Heart left ventricle (tissue), 16 donors: ENCODE measurements at regions of chr3 and their contacts with region 1.

Region 1: DNA sequence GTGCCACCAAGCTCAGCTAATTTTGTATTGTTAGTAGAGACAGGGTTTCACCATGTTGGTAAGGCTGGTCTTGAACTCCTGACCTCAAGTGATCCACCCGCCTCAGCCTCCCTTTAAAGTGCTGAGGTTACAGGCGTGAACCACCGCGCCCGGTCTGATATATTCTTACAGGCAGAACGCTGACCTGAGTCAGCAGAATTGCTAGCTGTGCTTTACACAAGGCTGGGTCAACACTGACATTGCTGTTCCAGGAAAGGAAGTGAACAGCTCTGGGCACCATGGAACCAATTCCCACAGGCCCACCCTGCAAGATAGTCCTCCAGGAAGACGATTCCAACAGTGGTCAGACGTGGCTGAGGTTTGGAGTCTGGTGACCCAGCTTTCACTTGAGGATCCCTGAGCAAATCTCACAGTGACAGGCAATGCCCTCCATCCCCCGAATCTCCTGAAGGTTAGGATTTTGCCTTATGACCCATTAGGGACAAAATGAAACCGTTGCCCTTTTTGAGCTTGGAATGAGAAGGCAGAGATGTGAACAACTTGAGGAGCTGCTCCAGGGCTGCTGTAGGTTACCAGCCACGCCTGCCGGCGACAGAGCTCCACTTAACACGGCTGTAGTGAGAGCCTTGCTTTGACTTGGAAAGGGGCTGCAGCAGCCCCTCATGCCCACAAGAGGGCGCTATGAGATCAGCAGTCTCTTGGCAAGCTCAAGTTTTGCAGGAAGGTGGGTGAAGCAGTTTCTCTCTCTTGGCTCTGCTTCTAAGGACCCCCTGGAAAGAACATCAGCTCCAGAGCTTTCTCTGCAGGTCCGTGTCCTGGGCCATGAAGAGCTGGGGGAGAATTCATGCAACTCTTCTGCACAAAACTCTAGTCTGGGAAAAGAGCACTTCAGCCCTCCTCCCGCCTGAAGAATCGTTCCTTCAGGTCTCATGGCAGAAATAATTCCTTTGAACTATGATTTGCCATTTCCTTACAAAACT is 74.1 kb downstream of the SENP2 start:
- DNase-seq: peak; percentile 58 to 74 (median 71)
- ATAC-seq: peak; percentile 39 to 74 (median 56)
- H3K4me3 ChIP-seq: peak overlapping the region in 1 of 12 donors; percentile 25
- H3K27ac ChIP-seq: no peak overlapping the region
- H3K4me1 ChIP-seq: peaks cover 0 to 32% (median 5%) of the 10 kb centered on the region in 12 donors
- H3K27me3 ChIP-seq: no peaks in the 10 kb centered on the region
- CTCF ChIP-seq: peak; percentile 88 to 98 (median 96)
- POLR2A ChIP-seq: no peak

Region 2: GRCh38 chr3:185764163-185764979 is 104.1 kb after region 1 on chr3:
- intact Hi-C with region 1: loop called in 5 of 10 experiments (anchors 1 to 10 kb)
- DNase-seq: no peak
- ATAC-seq: peak; percentile 38 to 60 (median 44)
- H3K4me3 ChIP-seq: peak overlapping the region in 7 of 12 donors; percentile 7 to 28 (median 22)
- H3K27ac ChIP-seq: peak overlapping the region in 7 of 12 donors; percentile 7 to 44 (median 22)
- H3K4me1 ChIP-seq: peaks cover 0 to 31% (median 21%) of the 10 kb centered on the region in 12 donors
- H3K27me3 ChIP-seq: no peaks in the 10 kb centered on the region
- CTCF ChIP-seq: no peak
- POLR2A ChIP-seq: no peak

Region 3: GRCh38 chr3:185770109-185770508 is 109.9 kb after region 1 on chr3:
- intact Hi-C with region 1: loop called in 5 of 10 experiments (anchors 1 to 10 kb)
- DNase-seq: no peak
- ATAC-seq: no peak
- H3K4me3 ChIP-seq: no peak overlapping the region
- H3K27ac ChIP-seq: no peak overlapping the region
- H3K4me1 ChIP-seq: peaks cover 0 to 16% (median 7%) of the 10 kb centered on the region in 12 donors
- H3K27me3 ChIP-seq: no peaks in the 10 kb centered on the region
- CTCF ChIP-seq: no peak
- POLR2A ChIP-seq: no peak